Gastrocnemius medialis (tissue), 4 donors: ENCODE measurements at regions of chr2 and their contacts with region 1.

Region 1: GRCh38 chr2:33599175-33599942 is at the start of gene FAM98A:
- DNase-seq: peak; percentile 99
- ATAC-seq: peak; percentile 93 to 95
- H3K4me3 ChIP-seq: peak within 1 kb of the TSS; percentile 89 to 99 (median 96)
- H3K27ac ChIP-seq: peak within 1 kb of the TSS; percentile 95 to 98 (median 96)
- H3K4me1 ChIP-seq: peaks cover 15 to 28% of the 10 kb centered on the region in 2 donors
- H3K27me3 ChIP-seq: no peaks in the 10 kb centered on the region
- CTCF ChIP-seq: peak in 2 of 5 experiments; percentile 9 to 35
- POLR2A ChIP-seq: peak; percentile 73 to 78
- total RNA-seq, gene FAM98A: 33.7 to 1,115 (median 44.2) TPM

Region 2: GRCh38 chr2:32772638-32773447 is 826.5 kb before region 1 on chr2:
- in situ Hi-C with region 1: loop called in 2 of 4 experiments (anchors 25 kb)
- intact Hi-C with region 1: no loop called
- DNase-seq: no peak
- ATAC-seq: peak in 1 of 2 donors; percentile 47
- H3K4me3 ChIP-seq: no peak overlapping the region
- H3K27ac ChIP-seq: no peak overlapping the region
- H3K4me1 ChIP-seq: no peaks in the 10 kb centered on the region
- H3K27me3 ChIP-seq: no peaks in the 10 kb centered on the region
- CTCF ChIP-seq: peak; percentile 48 to 65 (median 60)
- POLR2A ChIP-seq: no peak

Region 3: GRCh38 chr2:32792416-32792815 is 806.9 kb before region 1 on chr2:
- in situ Hi-C with region 1: loop called in 1 of 4 experiments (anchors 25 kb)
- intact Hi-C with region 1: no loop called
- DNase-seq: no peak
- ATAC-seq: peak; percentile 36 to 58
- H3K4me3 ChIP-seq: no peak overlapping the region
- H3K27ac ChIP-seq: no peak overlapping the region
- H3K4me1 ChIP-seq: peaks cover 7 to 8% of the 10 kb centered on the region in 2 donors
- H3K27me3 ChIP-seq: no peaks in the 10 kb centered on the region
- CTCF ChIP-seq: no peak
- POLR2A ChIP-seq: no peak

Region 4: DNA sequence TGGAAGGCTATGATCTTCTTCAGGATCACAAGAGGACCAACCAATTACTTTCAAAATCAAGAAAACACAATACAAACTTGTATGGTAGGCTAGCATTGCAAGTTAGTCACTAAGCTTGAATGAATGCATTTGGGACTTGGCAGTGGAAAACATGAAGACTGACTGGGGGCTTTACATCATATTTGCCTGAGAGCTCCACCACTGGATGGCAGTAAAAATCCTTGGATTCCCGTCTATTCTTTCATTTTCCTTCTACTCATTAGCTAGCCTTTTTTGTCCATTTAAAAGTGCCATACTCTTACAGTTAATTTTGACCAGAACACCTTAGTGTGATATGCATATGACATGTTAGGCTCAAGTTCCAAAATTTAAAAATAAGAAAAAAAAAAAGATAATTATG is 186.4 kb before region 1 on chr2:
- in situ Hi-C with region 1: loop called in 1 of 4 experiments (anchors 25 kb)
- intact Hi-C with region 1: no loop called
- DNase-seq: no peak
- ATAC-seq: no peak
- H3K4me3 ChIP-seq: no peak overlapping the region
- H3K27ac ChIP-seq: no peak overlapping the region
- H3K4me1 ChIP-seq: peaks cover 0 to 6% of the 10 kb centered on the region in 2 donors
- H3K27me3 ChIP-seq: no peaks in the 10 kb centered on the region
- CTCF ChIP-seq: peak; percentile 17 to 59 (median 26)
- POLR2A ChIP-seq: no peak

Region 5: DNA sequence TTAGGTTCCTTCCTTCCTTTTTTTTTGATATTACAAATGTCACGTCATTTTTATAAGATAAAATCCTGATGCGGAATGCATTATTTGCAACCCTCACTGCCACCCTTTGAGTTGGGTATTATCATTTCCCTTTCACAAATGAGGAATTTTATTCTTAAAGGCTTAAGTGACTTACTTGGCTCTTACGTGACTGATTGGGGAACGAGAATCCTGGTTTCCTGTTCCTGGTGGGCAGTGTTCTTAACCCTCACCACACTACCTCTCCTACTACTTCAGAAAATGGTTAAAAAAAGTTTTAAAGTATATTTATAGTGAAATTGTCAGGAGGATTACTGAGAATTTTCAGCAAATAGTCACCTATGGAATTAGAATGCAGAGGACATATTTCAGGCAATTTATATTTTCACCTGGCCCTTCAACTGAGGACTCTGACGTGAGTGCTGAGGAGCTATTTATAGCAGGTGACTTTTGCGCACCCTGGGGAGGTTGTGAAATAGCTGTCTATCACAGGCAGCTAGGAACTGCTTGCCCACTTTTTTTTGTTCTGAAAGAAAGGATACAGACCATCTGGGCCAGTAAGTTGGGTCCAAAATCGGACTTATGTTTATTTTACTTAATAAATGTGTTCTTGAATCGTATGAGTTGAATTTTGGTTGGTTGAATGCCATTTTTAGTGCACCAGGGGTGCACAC is 141.7 kb before region 1 on chr2:
- in situ Hi-C with region 1: no loop called
- intact Hi-C with region 1: loop called (anchors 1 kb)
- DNase-seq: peak; percentile 67 to 82
- ATAC-seq: peak; percentile 96 to 98
- H3K4me3 ChIP-seq: peak overlapping the region; percentile 18 to 60 (median 48)
- H3K27ac ChIP-seq: peak overlapping the region; percentile 82 to 91 (median 90)
- H3K4me1 ChIP-seq: peaks cover 17 to 21% of the 10 kb centered on the region in 2 donors
- H3K27me3 ChIP-seq: no peaks in the 10 kb centered on the region
- CTCF ChIP-seq: no peak
- POLR2A ChIP-seq: peak in 1 of 2 donors; percentile 26

Region 6: DNA sequence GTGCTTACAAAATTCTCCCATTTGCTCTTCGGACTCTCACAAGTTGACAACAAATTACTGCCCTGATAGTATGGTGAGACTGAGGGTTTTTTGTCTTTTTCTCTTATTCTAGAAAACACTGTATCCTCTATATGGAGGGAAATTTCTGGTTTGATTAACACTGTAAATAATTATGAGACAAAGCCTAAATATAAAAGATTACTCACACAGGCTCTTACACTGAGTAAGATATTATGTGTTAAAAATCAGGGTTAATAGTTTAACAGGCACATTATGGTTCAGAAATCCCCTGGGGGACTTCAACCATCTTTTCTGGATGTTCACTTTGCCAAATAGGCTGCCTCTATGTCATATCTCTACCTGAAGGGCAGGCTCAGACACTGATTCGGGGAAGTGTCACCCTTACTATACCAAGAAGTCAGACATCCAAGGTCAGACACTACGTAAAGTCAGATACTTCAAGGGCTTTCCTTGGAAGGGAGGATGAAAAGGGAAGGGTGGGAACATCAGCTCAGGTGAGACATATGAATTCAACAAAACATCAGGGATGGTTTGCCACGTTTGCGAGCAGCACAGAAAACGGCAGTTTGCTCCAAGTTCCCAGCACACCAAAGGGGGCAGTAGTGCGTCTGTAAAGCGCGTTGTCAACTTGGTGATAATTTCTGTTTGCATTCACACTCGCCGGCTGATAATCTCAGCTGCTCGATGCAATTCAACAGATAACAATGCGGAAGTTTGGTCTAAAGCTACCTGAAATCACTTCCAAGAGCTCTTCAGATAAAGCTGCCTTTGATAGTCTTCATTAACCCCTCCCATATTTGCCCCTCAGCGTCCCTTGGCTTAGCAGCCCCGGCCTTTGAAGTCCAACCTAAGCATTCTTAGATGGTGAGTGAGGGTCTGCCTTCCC is 123.9 kb before region 1 on chr2:
- in situ Hi-C with region 1: no loop called
- intact Hi-C with region 1: loop called (anchors 5 kb)
- DNase-seq: peak; percentile 72 to 78
- ATAC-seq: peak; percentile 76 to 77
- H3K4me3 ChIP-seq: peak overlapping the region; percentile 69 to 99 (median 78)
- H3K27ac ChIP-seq: peak overlapping the region; percentile 90 to 100 (median 93)
- H3K4me1 ChIP-seq: peaks cover 48 to 52% of the 10 kb centered on the region in 2 donors
- H3K27me3 ChIP-seq: no peaks in the 10 kb centered on the region
- CTCF ChIP-seq: peak; percentile 75 to 91 (median 87)
- POLR2A ChIP-seq: no peak